Posterior cingulate gyrus (tissue), 11 donors: ENCODE measurements at regions of chr17 and their contacts with region 1.

Region 1: DNA sequence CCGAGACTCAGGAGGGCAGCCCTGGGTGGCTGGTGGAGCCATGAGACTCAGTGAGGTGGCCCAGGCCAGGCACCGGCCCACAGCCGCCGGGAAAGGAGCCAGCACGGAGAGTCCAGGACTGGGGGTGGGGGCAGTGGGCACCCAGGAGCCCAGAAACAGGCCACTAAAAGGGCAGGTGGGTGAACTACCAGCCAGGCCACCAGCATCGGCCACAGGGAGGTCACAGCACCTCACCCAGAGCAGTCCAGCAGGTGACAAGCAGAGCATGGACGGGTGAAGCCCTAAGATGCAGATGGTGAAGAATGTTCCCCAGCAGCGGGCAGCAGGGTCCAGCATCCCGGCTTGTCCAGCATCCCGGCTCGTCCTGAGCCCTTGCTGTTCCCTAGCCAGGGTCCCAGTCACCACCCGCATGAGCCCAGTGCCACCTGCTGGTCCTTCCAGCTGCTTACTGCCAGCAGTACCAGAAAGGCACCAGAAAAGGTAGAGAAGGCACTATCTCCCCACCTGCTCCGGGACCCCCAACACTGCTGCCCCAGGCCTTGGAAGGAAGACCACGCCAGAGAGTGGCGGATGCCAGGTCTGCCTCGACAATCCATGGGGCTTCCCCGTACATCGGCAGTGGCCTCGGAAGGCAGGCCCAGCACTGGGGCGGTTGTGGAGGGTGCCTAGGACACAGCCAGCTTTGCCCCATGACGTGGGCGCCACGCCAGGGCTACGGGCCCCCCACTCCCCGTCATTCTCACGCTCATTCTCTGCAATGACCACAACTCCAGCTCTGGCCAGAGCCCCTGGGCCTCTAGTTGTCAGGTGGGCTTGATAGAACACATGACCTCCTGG is 1.6 kb downstream of the CENPX start:
- DNase-seq: peak; percentile 68 to 97 (median 82)

Region 2: GRCh38 chr17:81959362-81960129 is 61.6 kb before region 1 on chr17:
- intact Hi-C with region 1: loop called (anchors 1 kb)
- DNase-seq: peak in 8 of 10 donors; percentile 45 to 96 (median 68)